Right cardiac atrium (tissue), 5 donors: ENCODE measurements at regions of chr1 and their contacts with region 1.

Region 1: GRCh38 chr1:154479764-154480421 is 22.1 kb upstream of the TDRD10 start:
- DNase-seq: peak in 2 of 3 donors; percentile 44 to 62
- ATAC-seq: peak; percentile 83 to 91
- H3K4me3 ChIP-seq: no peak overlapping the region
- H3K27ac ChIP-seq: no peak overlapping the region
- H3K4me1 ChIP-seq: no peaks in the 10 kb centered on the region
- H3K27me3 ChIP-seq: no peaks in the 10 kb centered on the region

Region 2: GRCh38 chr1:154546264-154547063 is 66.6 kb after region 1 on chr1:
- intact Hi-C with region 1: loop called in 2 of 4 experiments (anchors 5 kb)
- DNase-seq: peak; percentile 59 to 77 (median 73)
- ATAC-seq: peak; percentile 60 to 75
- H3K4me3 ChIP-seq: no peak overlapping the region
- H3K27ac ChIP-seq: no peak overlapping the region
- H3K4me1 ChIP-seq: peaks cover 5% of the 10 kb centered on the region
- H3K27me3 ChIP-seq: no peaks in the 10 kb centered on the region